Activated T-helper 1 cell treated with anti-CD3 and anti-CD28 coated beads, Interleukin-12 subunit alpha, Interleukin-12 subunit beta, Interleukin-2, Interleukin-4 antibody, amounts not matched to agents 30 ng/mL and 10 ng/mL and 1 ng/mL, durations not matched to agents 14 hours and 24 hours and 36 hours (primary cell): ENCODE measurements at regions of chr6 and their contacts with region 1.

Region 1: GRCh38 chr6:45009576-45009975 is 318.6 kb upstream of the RUNX2 start:
- DNase-seq: no peak
- H3K4me3 Mint-ChIP-seq: no peak overlapping the region
- H3K27ac Mint-ChIP-seq: peak overlapping the region; percentile 67
- H3K4me1 Mint-ChIP-seq: peaks cover 30% of the 10 kb centered on the region
- H3K27me3 Mint-ChIP-seq: no peaks in the 10 kb centered on the region

Region 2: GRCh38 chr6:43673444-43674084 is 1336.0 kb before region 1 on chr6:
- intact Hi-C with region 1: no loop called
- DNase-seq: no peak
- H3K4me3 Mint-ChIP-seq: no peak overlapping the region
- H3K27ac Mint-ChIP-seq: no peak overlapping the region
- H3K4me1 Mint-ChIP-seq: peaks cover 22% of the 10 kb centered on the region
- H3K27me3 Mint-ChIP-seq: no peaks in the 10 kb centered on the region

Region 3: DNA sequence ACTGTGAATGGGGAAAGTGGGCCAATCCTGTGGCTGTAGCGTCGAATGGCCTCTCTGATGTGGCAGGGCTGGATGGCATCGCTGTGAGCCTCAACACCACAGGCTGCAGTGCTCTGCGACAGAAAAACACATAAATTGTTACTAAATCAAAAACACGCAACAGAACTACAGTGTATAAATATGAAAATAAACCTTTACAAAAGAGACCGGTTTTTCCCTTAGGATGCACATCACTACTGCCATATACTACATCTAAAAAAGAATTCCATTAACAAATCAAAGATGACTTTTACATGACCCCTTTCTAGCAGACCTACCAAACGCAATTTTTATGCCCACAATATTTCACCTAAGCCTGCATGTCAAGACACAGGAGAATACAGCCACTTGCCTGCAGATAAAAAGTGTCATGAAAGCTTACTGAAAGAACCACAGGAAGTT is 76.9 kb before region 1 on chr6:
- intact Hi-C with region 1: loop called (anchors 2 kb)
- DNase-seq: no peak
- H3K4me3 Mint-ChIP-seq: peak overlapping the region; percentile 79
- H3K27ac Mint-ChIP-seq: peak overlapping the region; percentile 94
- H3K4me1 Mint-ChIP-seq: peaks cover 56% of the 10 kb centered on the region
- H3K27me3 Mint-ChIP-seq: no peaks in the 10 kb centered on the region

Region 4: DNA sequence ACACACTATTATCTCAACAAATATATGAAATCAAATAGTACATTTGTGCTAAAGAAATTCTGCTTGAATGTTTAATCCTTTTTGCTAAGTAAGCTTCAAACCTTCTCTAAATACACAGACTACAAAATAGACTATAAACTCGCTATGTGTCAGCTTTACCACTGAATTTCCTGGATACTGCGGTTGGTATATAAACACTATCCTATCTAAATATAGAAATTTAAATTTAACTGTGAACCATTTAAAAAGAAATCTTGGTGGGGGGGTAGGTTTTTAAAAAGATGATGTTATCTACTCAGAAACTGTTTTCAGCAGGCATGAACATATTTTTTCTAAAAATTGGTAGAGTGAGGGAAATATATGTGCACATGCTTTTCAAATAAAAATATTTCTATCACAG is 12.1 kb after region 1 on chr6:
- intact Hi-C with region 1: loop called (anchors 2 kb)
- DNase-seq: no peak
- H3K4me3 Mint-ChIP-seq: no peak overlapping the region
- H3K27ac Mint-ChIP-seq: peak overlapping the region; percentile 23
- H3K4me1 Mint-ChIP-seq: peaks cover 19% of the 10 kb centered on the region
- H3K27me3 Mint-ChIP-seq: no peaks in the 10 kb centered on the region

Region 5: GRCh38 chr6:45156075-45156474 is 146.5 kb after region 1 on chr6:
- intact Hi-C with region 1: loop called (anchors 1 kb)
- DNase-seq: peak; percentile 47
- H3K4me3 Mint-ChIP-seq: no peak overlapping the region
- H3K27ac Mint-ChIP-seq: peak overlapping the region; percentile 53
- H3K4me1 Mint-ChIP-seq: peaks cover 56% of the 10 kb centered on the region
- H3K27me3 Mint-ChIP-seq: no peaks in the 10 kb centered on the region

Region 6: GRCh38 chr6:45822246-45822812 is 812.8 kb after region 1 on chr6:
- intact Hi-C with region 1: loop called (anchors 5 kb)
- DNase-seq: no peak
- H3K4me3 Mint-ChIP-seq: peak overlapping the region; percentile 41
- H3K27ac Mint-ChIP-seq: peak overlapping the region; percentile 76
- H3K4me1 Mint-ChIP-seq: peaks cover 32% of the 10 kb centered on the region
- H3K27me3 Mint-ChIP-seq: no peaks in the 10 kb centered on the region